ENCODE measurements at regions of chr13 and their contacts with region 1.

Region 1: GRCh38 chr13:110108347-110109174 is 198.4 kb downstream of the COL4A1 start:
- DNase-seq: peak; percentile 52 to 89 (median 76)
- ATAC-seq: peak; percentile 86 to 96 (median 93)
- H3K4me3 ChIP-seq: no peak overlapping the region
- H3K27ac ChIP-seq: no peak overlapping the region
- H3K4me1 ChIP-seq: peaks cover 0 to 3% (median 0%) of the 10 kb centered on the region in 3 donors
- H3K27me3 ChIP-seq: no peaks in the 10 kb centered on the region
- CTCF ChIP-seq: peak in 3 of 4 donors; percentile 29 to 50 (median 34)

Region 2: GRCh38 chr13:108961542-108962125 is 1146.9 kb before region 1 on chr13:
- intact Hi-C with region 1: loop called in 2 of 3 experiments (anchors 5 to 10 kb)
- DNase-seq: no peak
- ATAC-seq: peak; percentile 76 to 91 (median 82)
- H3K4me3 ChIP-seq: no peak overlapping the region
- H3K27ac ChIP-seq: no peak overlapping the region
- H3K4me1 ChIP-seq: no peaks in the 10 kb centered on the region
- H3K27me3 ChIP-seq: no peaks in the 10 kb centered on the region
- CTCF ChIP-seq: peak; percentile 66 to 78 (median 76)

Region 3: DNA sequence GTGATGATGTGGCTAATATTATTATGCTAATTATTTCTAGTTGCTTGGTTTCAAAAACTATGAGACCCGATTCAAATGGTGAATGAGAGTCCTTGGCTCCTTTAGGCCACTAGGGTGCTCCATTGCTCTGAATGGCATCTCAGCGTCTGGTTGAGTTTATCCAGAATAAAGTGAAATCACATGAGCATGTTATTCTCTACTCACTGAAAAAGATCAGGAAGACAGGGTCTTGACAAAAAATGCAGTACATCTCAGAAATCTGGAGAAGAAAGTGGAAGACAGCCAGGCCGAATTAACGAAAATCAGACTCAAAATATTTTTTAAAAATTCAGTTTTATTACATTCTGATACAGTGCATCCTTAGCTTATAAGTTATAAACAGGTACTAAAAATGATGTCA is 962.9 kb before region 1 on chr13:
- intact Hi-C with region 1: loop called in 1 of 3 experiments (anchors 10 kb)
- DNase-seq: peak in 2 of 6 donors; percentile 12 to 50
- ATAC-seq: peak in 3 of 4 donors; percentile 89 to 93 (median 92)
- H3K4me3 ChIP-seq: no peak overlapping the region
- H3K27ac ChIP-seq: no peak overlapping the region
- H3K4me1 ChIP-seq: no peaks in the 10 kb centered on the region
- H3K27me3 ChIP-seq: peaks cover 0 to 8% (median 0%) of the 10 kb centered on the region in 4 donors
- CTCF ChIP-seq: peak in 3 of 4 donors; percentile 58 to 62 (median 60)

Measured in pancreas (tissue), 10 donors.